Activated naive CD4-positive, alpha-beta T cell treated with anti-CD3 and anti-CD28 coated beads, Interleukin-2, amount 10 ng/mL, durations not matched to agents 7 days and 5 days (primary cell): ENCODE measurements at regions of chr18 and their contacts with region 1.

Region 1: DNA sequence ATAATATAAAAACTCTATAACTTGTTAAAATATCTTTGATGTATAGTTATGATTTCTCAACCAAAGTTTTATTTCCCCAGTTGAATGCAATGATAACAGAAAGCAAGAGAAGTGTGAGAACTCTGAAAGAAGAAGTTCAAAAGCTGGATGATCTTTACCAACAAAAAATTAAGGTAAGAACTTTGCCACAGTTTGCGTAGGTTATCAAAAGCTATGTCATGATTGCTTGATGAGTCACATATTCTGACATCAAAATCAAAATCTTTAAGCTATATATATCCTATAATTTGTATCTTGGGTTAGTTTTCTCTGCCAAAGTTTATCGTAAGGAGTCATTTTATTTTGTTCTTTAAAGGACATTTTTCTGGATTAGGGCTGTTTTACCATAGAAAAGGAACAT is 35.0 kb downstream of the NDC80 start:
- DNase-seq: no peak
- H3K4me3 Mint-ChIP-seq: peak overlapping the region; percentile 50
- H3K27ac Mint-ChIP-seq: peak overlapping the region; percentile 91
- H3K4me1 Mint-ChIP-seq: peaks cover 66% of the 10 kb centered on the region
- H3K27me3 Mint-ChIP-seq: no peaks in the 10 kb centered on the region

Region 2: DNA sequence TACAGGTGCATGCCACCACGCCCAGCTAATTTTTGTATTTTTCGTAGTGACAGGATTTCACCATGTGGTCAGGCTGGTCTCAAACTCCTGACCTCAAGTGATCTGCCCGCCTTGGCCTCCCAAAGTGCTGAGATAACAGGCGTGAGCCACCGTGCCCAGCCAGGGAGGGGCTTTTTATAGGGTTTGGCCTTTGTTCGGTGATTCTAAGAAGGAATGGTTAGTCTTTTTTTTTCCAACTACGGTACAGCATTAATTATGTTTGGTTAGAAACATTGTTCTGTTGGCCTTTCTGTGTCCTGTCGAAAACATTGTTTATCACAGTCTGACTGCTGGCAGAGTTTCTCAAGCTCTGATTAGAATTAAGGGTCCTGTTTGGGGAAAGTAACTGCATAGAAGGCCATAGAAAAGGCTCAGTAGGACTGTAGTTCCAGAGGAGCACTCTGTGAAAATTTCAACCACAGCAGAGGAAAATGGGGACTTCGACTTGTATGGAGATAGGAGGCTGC is 29.8 kb after region 1 on chr18:
- CTCF ChIA-PET with region 1: interaction called, 11 read pairs
- DNase-seq: peak; percentile 41
- H3K4me3 Mint-ChIP-seq: peak overlapping the region; percentile 73
- H3K27ac Mint-ChIP-seq: peak overlapping the region; percentile 100
- H3K4me1 Mint-ChIP-seq: peaks cover 82% of the 10 kb centered on the region
- H3K27me3 Mint-ChIP-seq: no peaks in the 10 kb centered on the region

Region 3: DNA sequence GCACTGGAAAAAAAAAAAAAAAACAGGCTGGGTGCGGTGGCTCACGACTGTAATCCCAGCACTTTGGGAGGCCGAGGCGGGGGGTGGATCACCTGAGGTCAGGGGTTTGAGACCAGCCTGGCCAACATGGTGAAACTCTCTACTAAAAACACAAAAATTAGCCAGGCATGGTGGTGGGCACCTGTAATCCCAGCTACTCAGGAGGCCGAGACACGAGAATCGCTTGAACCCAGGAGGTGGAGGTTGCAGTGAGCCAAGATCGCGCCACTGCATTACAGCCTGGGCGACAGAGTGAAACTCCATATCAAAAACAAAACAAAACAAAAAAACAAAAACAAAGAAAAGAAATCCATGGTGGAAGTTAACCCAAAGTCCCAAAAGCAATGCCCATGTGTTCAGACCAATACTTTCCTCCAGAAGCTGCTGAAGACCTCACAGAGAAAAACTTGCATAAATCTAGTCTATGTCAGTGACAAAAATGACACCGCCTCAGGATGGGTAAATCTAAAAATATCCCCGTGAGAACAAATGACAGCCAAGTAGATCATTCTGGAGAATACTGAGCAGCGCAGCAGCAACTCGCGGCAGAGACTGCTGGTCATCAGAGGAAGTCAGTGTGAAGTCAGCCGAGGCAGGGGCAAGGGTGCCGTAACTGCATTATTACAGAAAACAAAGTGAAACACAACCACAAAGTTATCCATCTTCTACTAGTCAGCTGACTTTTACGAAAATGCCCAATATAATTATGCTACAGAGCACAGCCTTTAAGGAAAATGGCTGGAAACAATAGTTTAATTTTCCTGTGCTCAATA is 365.6 kb after region 1 on chr18:
- CTCF ChIA-PET with region 1: no interaction called
- DNase-seq: peak; percentile 81
- H3K4me3 Mint-ChIP-seq: peak overlapping the region; percentile 73
- H3K27ac Mint-ChIP-seq: peak overlapping the region; percentile 96
- H3K4me1 Mint-ChIP-seq: peaks cover 92% of the 10 kb centered on the region
- H3K27me3 Mint-ChIP-seq: no peaks in the 10 kb centered on the region